ENCODE measurements at regions of chr1 and their contacts with region 1.

Region 1: GRCh38 chr1:9494929-9495758 is 44.1 kb upstream of the SLC25A33 start:
- DNase-seq: peak; percentile 14
- H3K4me3 ChIP-seq: no peak overlapping the region
- H3K27ac ChIP-seq: no peak overlapping the region
- H3K4me1 ChIP-seq: no peaks in the 10 kb centered on the region
- H3K27me3 ChIP-seq: no peaks in the 10 kb centered on the region
- CTCF ChIP-seq: peak; percentile 54 to 91

Region 2: GRCh38 chr1:9110669-9111356 is 384.3 kb before region 1 on chr1:
- CTCF ChIA-PET with region 1: interaction called, 4 read pairs
- dilution Hi-C with region 1: no loop called
- in situ Hi-C with region 1: no loop called
- intact Hi-C with region 1: loop called (anchors 1 kb)
- DNase-seq: peak; percentile 97
- H3K4me3 ChIP-seq: no peak overlapping the region
- H3K27ac ChIP-seq: no peak overlapping the region
- H3K4me1 ChIP-seq: peaks cover 13% of the 10 kb centered on the region
- H3K27me3 ChIP-seq: no peaks in the 10 kb centered on the region
- CTCF ChIP-seq: peak; percentile 87 to 93

Region 3: GRCh38 chr1:9181176-9181906 is 313.8 kb before region 1 on chr1:
- CTCF ChIA-PET with region 1: no interaction called
- dilution Hi-C with region 1: no loop called
- in situ Hi-C with region 1: no loop called
- intact Hi-C with region 1: loop called (anchors 5 kb)
- DNase-seq: peak; percentile 52
- H3K4me3 ChIP-seq: peak overlapping the region; percentile 92 to 98 (median 94)
- H3K27ac ChIP-seq: peak overlapping the region; percentile 91
- H3K4me1 ChIP-seq: peaks cover 27% of the 10 kb centered on the region
- H3K27me3 ChIP-seq: no peaks in the 10 kb centered on the region
- CTCF ChIP-seq: peak; percentile 84 to 96

Region 4: DNA sequence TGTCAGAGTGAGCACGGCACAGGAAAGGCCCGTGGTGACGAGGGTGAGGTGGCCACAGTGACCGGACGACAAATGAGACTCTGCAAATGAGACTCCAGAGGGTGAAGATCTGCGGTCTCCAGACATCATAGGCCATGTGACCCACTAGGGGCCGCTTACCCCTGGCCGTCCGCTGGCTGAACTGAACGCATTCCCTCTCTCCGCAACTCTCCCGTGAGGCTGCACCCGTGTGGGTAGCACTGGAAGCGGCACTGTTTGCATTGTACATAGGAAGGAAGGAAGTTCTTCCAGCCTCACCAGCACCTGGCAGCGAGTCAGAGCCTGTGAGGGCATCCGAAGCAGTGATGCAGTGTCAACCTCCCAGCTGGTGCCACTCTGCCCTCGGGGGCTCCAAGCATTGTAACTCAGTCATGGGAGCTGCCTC is 226.1 kb before region 1 on chr1:
- CTCF ChIA-PET with region 1: no interaction called
- dilution Hi-C with region 1: no loop called
- in situ Hi-C with region 1: no loop called
- intact Hi-C with region 1: loop called (anchors 1 kb)
- DNase-seq: peak; percentile 15
- H3K4me3 ChIP-seq: no peak overlapping the region
- H3K27ac ChIP-seq: no peak overlapping the region
- H3K4me1 ChIP-seq: no peaks in the 10 kb centered on the region
- H3K27me3 ChIP-seq: no peaks in the 10 kb centered on the region
- CTCF ChIP-seq: no peak

Region 5: GRCh38 chr1:9428601-9429341 is 66.4 kb before region 1 on chr1:
- CTCF ChIA-PET with region 1: no interaction called
- dilution Hi-C with region 1: no loop called
- in situ Hi-C with region 1: no loop called
- intact Hi-C with region 1: loop called (anchors 2 kb)
- DNase-seq: peak; percentile 99
- H3K4me3 ChIP-seq: peak overlapping the region; percentile 50 to 61 (median 59)
- H3K27ac ChIP-seq: peak overlapping the region; percentile 94
- H3K4me1 ChIP-seq: peaks cover 9% of the 10 kb centered on the region
- H3K27me3 ChIP-seq: no peaks in the 10 kb centered on the region
- CTCF ChIP-seq: peak in 1 of 2 donors; percentile 41

Region 6: GRCh38 chr1:9573723-9574122 is 78.6 kb after region 1 on chr1:
- CTCF ChIA-PET with region 1: no interaction called
- dilution Hi-C with region 1: no loop called
- in situ Hi-C with region 1: loop called in 1 of 2 experiments (anchors 10 kb)
- intact Hi-C with region 1: loop called (anchors 1 kb)
- DNase-seq: no peak
- H3K4me3 ChIP-seq: no peak overlapping the region
- H3K27ac ChIP-seq: no peak overlapping the region
- H3K4me1 ChIP-seq: no peaks in the 10 kb centered on the region
- H3K27me3 ChIP-seq: no peaks in the 10 kb centered on the region
- CTCF ChIP-seq: peak in 1 of 2 donors; percentile 34